Activated CD8-positive, alpha-beta T cell treated with anti-CD3 and anti-CD28 coated beads for 36 hours (primary cell): ENCODE measurements at regions of chr5 and their contacts with region 1.

Region 1: GRCh38 chr5:32232441-32233219 is 58.5 kb upstream of the GOLPH3 start:
- DNase-seq: peak; percentile 88
- ATAC-seq: peak; percentile 94
- H3K4me3 Mint-ChIP-seq: no peak overlapping the region
- H3K27ac Mint-ChIP-seq: peak overlapping the region; percentile 4
- H3K4me1 Mint-ChIP-seq: peaks cover 12% of the 10 kb centered on the region
- H3K27me3 Mint-ChIP-seq: no peaks in the 10 kb centered on the region
- CTCF ChIP-seq: peak; percentile 80

Region 2: GRCh38 chr5:32249646-32250045 is 17.0 kb after region 1 on chr5:
- CTCF ChIA-PET with region 1: interaction called, 16 read pairs
- POLR2A ChIA-PET with region 1: no interaction called
- intact Hi-C with region 1: no loop called
- DNase-seq: no peak
- ATAC-seq: no peak
- H3K4me3 Mint-ChIP-seq: no peak overlapping the region
- H3K27ac Mint-ChIP-seq: no peak overlapping the region
- H3K4me1 Mint-ChIP-seq: no peaks in the 10 kb centered on the region
- H3K27me3 Mint-ChIP-seq: no peaks in the 10 kb centered on the region
- CTCF ChIP-seq: no peak

Region 3: GRCh38 chr5:32307769-32308194 is 75.2 kb after region 1 on chr5:
- CTCF ChIA-PET with region 1: interaction called, 13 read pairs
- POLR2A ChIA-PET with region 1: no interaction called
- intact Hi-C with region 1: no loop called
- DNase-seq: no peak
- ATAC-seq: no peak
- H3K4me3 Mint-ChIP-seq: no peak overlapping the region
- H3K27ac Mint-ChIP-seq: no peak overlapping the region
- H3K4me1 Mint-ChIP-seq: peaks cover 66% of the 10 kb centered on the region
- H3K27me3 Mint-ChIP-seq: no peaks in the 10 kb centered on the region
- CTCF ChIP-seq: no peak

Region 4: DNA sequence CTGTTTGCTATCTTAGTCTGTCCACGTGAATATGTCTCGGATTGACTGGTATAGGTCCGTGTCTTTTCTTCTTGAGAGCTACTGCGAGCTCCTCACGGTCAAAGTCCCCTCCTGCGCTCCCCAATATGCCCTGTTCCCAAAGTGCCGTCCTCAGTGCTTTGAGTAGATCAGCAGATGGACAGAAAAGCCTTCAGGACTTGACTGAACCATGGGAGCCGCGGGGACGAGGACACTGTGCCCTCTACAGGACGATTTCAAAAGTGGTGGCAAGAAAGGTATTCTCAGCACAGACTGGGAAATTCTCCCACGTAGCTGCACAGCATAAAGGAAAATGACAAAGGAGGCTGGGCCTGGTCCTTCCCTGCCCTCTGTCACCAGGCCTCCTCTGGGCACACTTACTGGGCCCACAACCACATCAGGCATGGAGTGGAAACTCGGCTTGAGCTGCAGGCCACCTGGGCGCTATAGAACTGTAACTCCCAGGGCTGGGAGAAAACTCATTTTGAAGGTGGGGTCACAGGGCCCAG is 96.7 kb after region 1 on chr5:
- CTCF ChIA-PET with region 1: interaction called, 164 read pairs
- POLR2A ChIA-PET with region 1: interaction called, 7 read pairs
- intact Hi-C with region 1: loop called (anchors 1 kb)
- DNase-seq: peak; percentile 72
- ATAC-seq: peak; percentile 89
- H3K4me3 Mint-ChIP-seq: no peak overlapping the region
- H3K27ac Mint-ChIP-seq: no peak overlapping the region
- H3K4me1 Mint-ChIP-seq: peaks cover 4% of the 10 kb centered on the region
- H3K27me3 Mint-ChIP-seq: no peaks in the 10 kb centered on the region
- CTCF ChIP-seq: peak; percentile 64

Region 5: DNA sequence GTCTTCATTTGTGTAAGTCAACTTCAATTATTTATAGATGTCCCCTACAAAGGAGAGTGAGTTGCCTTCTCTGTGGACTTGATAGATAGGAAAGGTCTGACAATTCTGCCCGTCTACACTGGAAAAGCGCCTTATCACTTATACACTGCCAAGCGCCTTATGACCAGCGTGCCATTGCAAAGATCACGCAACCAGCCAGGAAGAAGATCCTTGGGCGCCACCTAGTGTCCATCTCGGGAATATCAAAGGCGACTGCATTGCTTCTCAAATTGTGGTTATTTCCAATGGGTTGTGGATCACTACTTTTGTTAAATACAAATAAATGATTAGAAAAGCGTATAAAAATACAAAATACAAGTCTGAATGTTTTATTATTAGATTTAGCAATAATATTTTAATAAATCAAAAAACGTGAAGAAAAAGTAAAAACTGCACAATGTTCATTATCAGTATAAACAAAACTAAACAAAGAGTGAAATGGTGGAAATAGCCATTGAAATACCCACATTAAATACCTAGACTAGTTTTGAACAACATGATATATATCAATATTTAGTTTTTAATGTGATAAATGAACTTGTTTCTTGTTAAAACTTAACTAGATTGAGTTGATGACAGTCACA is 380.5 kb after region 1 on chr5:
- CTCF ChIA-PET with region 1: interaction called, 10 read pairs
- POLR2A ChIA-PET with region 1: no interaction called
- intact Hi-C with region 1: loop called (anchors 5 kb)
- DNase-seq: peak; percentile 92
- ATAC-seq: peak; percentile 95
- H3K4me3 Mint-ChIP-seq: no peak overlapping the region
- H3K27ac Mint-ChIP-seq: peak overlapping the region; percentile 18
- H3K4me1 Mint-ChIP-seq: peaks cover 2% of the 10 kb centered on the region
- H3K27me3 Mint-ChIP-seq: no peaks in the 10 kb centered on the region
- CTCF ChIP-seq: peak; percentile 96